ENCODE measurements at regions of chr19 and their contacts with region 1.

Region 1: GRCh38 chr19:30696514-30696913 is 324.3 kb downstream of the ZNF536 start:
- DNase-seq: peak; percentile 65 to 82
- H3K4me3 ChIP-seq: no peak overlapping the region
- H3K27ac ChIP-seq: no peak overlapping the region
- H3K4me1 ChIP-seq: peaks cover 0 to 6% (median 2%) of the 10 kb centered on the region in 4 experiments; a peak in 3 of 7 replicates
- H3K27me3 ChIP-seq: no peaks in the 10 kb centered on the region
- CTCF ChIP-seq: peak; percentile 75 to 90 (median 83)
- EP300 ChIP-seq: no peak
- POLR2A ChIP-seq: no peak
- RAD21 ChIP-seq: peak; percentile 30 to 57; a peak in 3 of 4 replicates

Region 2: GRCh38 chr19:30669329-30670010 is 27.0 kb before region 1 on chr19:
- CTCF ChIA-PET with region 1: interaction called, 37 read pairs
- POLR2A ChIA-PET with region 1: no interaction called
- DNase-seq: peak in 1 of 2 experiments; percentile 95
- H3K4me3 ChIP-seq: peak overlapping the region in 1 of 4 experiments; percentile 38; a peak in 1 of 8 replicates
- H3K27ac ChIP-seq: no peak overlapping the region
- H3K4me1 ChIP-seq: peaks cover 0 to 3% (median 1%) of the 10 kb centered on the region in 4 experiments; a peak in 2 of 7 replicates
- H3K27me3 ChIP-seq: no peaks in the 10 kb centered on the region
- CTCF ChIP-seq: peak; percentile 77 to 82 (median 78)
- EP300 ChIP-seq: no peak
- POLR2A ChIP-seq: no peak
- RAD21 ChIP-seq: peak; percentile 79 to 83

Region 3: DNA sequence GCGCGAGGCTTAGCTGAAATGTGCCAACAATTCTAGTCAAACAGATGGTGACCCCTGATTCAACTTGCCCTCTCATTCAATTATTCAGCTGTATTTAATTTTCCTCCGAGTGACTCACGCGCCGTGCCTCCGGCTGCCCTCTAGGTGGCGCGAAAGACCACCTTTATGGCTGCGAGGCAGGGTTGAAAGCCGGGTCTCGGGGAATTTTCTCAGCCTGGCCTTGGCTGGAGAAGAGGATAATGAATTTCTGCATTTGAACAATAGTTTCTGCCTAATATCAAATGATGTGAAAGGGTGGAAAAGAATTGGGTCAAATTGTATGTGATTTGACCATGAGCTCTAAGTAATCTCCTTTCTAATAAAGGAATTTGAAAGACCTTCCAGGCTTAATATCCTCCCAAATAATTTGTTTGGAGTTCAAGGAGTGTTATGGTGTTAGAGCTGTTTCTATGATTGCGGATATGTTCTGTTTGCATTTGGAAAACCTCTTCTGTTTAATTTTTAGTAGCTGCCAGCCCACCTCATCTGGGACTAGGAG is 13.4 kb before region 1 on chr19:
- CTCF ChIA-PET with region 1: interaction called, 41 read pairs
- POLR2A ChIA-PET with region 1: interaction called, 3 read pairs
- DNase-seq: peak in 1 of 2 experiments; percentile 82
- H3K4me3 ChIP-seq: no peak overlapping the region
- H3K27ac ChIP-seq: no peak overlapping the region
- H3K4me1 ChIP-seq: peaks cover 0 to 3% (median 0%) of the 10 kb centered on the region in 4 experiments; a peak in 2 of 7 replicates
- H3K27me3 ChIP-seq: no peaks in the 10 kb centered on the region
- CTCF ChIP-seq: peak; percentile 79 to 88 (median 86)
- EP300 ChIP-seq: no peak
- POLR2A ChIP-seq: no peak
- RAD21 ChIP-seq: peak; percentile 92 to 94

Region 4: GRCh38 chr19:30710721-30711120 is 14.2 kb after region 1 on chr19:
- CTCF ChIA-PET with region 1: interaction called, 13 read pairs
- POLR2A ChIA-PET with region 1: no interaction called
- DNase-seq: no peak
- H3K4me3 ChIP-seq: no peak overlapping the region
- H3K27ac ChIP-seq: no peak overlapping the region
- H3K4me1 ChIP-seq: peaks cover 0 to 3% (median 2%) of the 10 kb centered on the region in 4 experiments; a peak in 3 of 7 replicates
- H3K27me3 ChIP-seq: no peaks in the 10 kb centered on the region
- CTCF ChIP-seq: no peak
- EP300 ChIP-seq: no peak
- POLR2A ChIP-seq: no peak
- RAD21 ChIP-seq: no peak

Region 5: GRCh38 chr19:30719189-30719998 is 22.9 kb after region 1 on chr19:
- CTCF ChIA-PET with region 1: interaction called, 10 read pairs
- POLR2A ChIA-PET with region 1: interaction called, 4 read pairs
- DNase-seq: peak in 1 of 2 experiments; percentile 70
- H3K4me3 ChIP-seq: peak overlapping the region; percentile 26 to 64 (median 48)
- H3K27ac ChIP-seq: no peak overlapping the region
- H3K4me1 ChIP-seq: peaks cover 2 to 5% (median 3%) of the 10 kb centered on the region in 4 experiments; a peak in 6 of 7 replicates
- H3K27me3 ChIP-seq: peaks cover 0 to 11% (median 5%) of the 10 kb centered on the region in 4 experiments; a peak in 3 of 7 replicates
- CTCF ChIP-seq: 0 out of 4 replicates have a peak, but pooled peaks of 1 of the 3 experiments have one; percentile 10
- EP300 ChIP-seq: no peak
- POLR2A ChIP-seq: peak in 1 of 2 experiments; percentile 22; a peak in 1 of 3 replicates
- RAD21 ChIP-seq: peak in 1 of 2 experiments; percentile 31; a peak in 1 of 4 replicates

Region 6: DNA sequence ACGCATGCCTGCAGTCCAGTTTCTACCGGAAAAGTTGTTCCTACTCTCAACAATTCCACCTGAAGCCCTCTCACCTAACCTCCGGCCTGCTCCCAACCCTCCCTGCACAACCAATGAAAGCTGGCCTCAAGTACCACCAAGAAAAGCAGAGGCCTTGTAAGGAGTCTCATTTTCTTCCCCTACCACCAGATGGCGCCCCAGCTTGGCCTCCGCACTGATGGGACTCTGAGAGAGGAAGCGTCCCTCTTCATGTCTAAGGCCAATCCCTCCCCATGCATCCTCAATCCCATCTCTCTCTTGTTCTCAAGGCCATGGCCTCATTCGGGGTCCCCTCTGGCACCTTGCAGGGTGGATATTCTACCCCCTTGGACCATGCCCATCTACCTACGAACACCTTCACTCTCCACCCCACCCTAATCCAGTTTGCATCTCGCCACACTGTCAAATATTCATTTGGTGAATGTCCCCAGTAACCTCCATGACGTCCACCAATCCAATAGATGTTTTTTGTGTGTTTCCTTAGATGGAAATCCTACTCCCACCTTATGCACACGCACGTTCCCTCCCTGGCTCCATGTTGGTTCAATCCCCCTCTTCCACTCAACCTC is 88.4 kb after region 1 on chr19:
- CTCF ChIA-PET with region 1: interaction called, 11 read pairs
- POLR2A ChIA-PET with region 1: no interaction called
- DNase-seq: peak; percentile 13 to 89
- H3K4me3 ChIP-seq: no peak overlapping the region
- H3K27ac ChIP-seq: no peak overlapping the region
- H3K4me1 ChIP-seq: no peaks in the 10 kb centered on the region
- H3K27me3 ChIP-seq: no peaks in the 10 kb centered on the region
- CTCF ChIP-seq: peak; percentile 77 to 94 (median 83)
- EP300 ChIP-seq: no peak
- POLR2A ChIP-seq: no peak
- RAD21 ChIP-seq: peak; percentile 87 to 88